Head of caudate nucleus (tissue), 42 donors: ENCODE measurements at regions of chr20 and their contacts with region 1.

Region 1: GRCh38 chr20:59751056-59751688 is 146.8 kb downstream of the PHACTR3 start:
- DNase-seq: peak; percentile 80 to 94 (median 88)

Region 2: DNA sequence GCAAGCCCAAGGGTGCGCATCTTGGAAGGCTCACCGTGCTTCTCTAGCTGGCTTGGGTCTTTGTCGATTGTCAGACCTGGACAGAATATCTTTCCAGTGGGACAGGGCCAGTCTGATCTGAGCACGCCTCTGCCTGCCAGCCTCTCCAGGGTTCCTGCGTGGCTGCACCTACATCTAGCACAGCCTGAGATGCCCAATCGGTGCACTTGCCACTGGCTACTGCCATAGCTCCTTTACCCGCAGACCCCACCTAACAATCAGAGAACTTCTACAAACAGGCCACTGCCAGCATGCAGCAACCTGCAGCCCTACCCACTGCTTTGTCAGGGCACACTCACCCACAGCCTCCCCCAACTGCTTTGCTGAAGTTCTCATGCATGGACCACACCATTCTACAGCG is 203.6 kb before region 1 on chr20:
- intact Hi-C with region 1: no loop called
- DNase-seq: no peak

Region 3: GRCh38 chr20:59571551-59572314 is 179.4 kb before region 1 on chr20:
- intact Hi-C with region 1: loop called (anchors 2 kb)
- DNase-seq: peak; percentile 54 to 90 (median 78)

Region 4: GRCh38 chr20:59598625-59599310 is 152.4 kb before region 1 on chr20:
- intact Hi-C with region 1: loop called (anchors 2 kb)
- DNase-seq: peak; percentile 38 to 93 (median 77)

Region 5: GRCh38 chr20:59645761-59646171 is 105.4 kb before region 1 on chr20:
- intact Hi-C with region 1: loop called (anchors 2 kb)
- DNase-seq: peak in 39 of 42 donors; percentile 42 to 87 (median 69)

Region 6: DNA sequence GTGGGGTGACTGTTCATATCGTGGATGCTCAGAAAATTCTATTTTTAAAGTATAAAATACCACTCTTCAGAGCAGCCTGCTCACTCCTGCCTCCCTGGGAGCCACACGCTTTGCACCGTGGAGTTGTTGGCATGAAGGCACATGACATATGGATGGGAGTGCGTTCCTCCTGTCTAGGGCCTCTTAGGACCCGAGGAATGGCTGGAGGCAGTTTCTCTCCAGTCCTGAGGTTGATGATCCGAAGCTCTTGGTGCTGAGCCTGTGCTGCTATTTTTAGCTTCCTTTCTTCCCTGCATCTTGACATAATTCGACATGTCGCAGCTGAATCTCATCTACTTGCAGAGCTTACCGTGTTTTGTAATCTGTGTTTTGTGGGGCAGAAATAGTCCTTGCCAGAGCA is 72.9 kb before region 1 on chr20:
- intact Hi-C with region 1: loop called (anchors 10 kb)
- DNase-seq: peak in 25 of 42 donors; percentile 18 to 77 (median 46)